IMR-90 (cell line): ENCODE measurements at regions of chr5 and their contacts with region 1.

Region 1: DNA sequence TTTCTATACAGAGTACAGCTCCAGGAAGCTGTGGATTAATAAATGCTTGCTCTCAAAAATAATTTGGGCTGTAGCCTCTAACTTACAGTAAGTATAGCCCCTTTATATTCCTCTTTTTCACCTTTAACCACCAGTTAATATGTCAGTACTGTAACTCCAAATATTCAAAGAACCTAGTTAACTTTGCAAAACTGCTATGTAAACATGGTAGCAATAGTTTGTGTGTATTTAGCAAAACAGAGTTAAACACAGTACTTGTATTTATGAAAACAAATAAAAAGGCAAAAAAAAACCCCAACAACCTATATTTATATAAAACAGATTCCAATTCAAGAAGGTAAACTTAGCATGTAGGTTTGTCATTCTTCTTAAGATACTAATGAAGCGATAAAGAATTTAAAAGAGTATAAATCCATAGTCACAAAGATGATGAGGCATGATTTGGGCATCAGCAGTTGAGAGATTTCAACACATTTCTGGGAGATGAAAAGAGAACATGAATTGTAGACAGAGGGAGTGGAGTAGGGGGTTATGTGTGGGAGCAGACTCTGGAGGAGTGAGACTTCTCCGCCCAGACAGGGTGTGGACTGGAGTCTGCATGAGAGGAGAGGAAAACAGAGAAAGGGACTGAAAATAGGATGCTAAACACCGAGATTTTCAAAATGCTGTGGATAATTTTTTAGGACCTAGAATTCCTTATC is 47.0 kb upstream of the F2RL1 start:
- DNase-seq: peak; percentile 51
- ATAC-seq: peak; percentile 63
- H3K4me3 ChIP-seq: no peak overlapping the region
- H3K27ac ChIP-seq: peak overlapping the region; percentile 56; the same call in 1 of the 2 replicates
- H3K4me1 ChIP-seq: peaks cover 8% of the 10 kb centered on the region
- H3K27me3 ChIP-seq: no peaks in the 10 kb centered on the region
- CTCF ChIP-seq: no peak
- POLR2A ChIP-seq: no peak
- RAD21 ChIP-seq: no peak

Region 2: GRCh38 chr5:76402886-76403765 is 368.7 kb before region 1 on chr5 and contains the start of gene IQGAP2:
- CTCF ChIA-PET with region 1: no interaction called
- POLR2A ChIA-PET with region 1: no interaction called
- dilution Hi-C with region 1: no loop called
- in situ Hi-C with region 1: no loop called
- intact Hi-C with region 1: loop called (anchors 10 kb)
- DNase-seq: peak; percentile 34
- ATAC-seq: peak; percentile 85
- H3K4me3 ChIP-seq: peak within 1 kb of the TSS; percentile 51
- H3K27ac ChIP-seq: no peak within 1 kb of the TSS
- H3K4me1 ChIP-seq: no peaks in the 10 kb centered on the region
- H3K27me3 ChIP-seq: peaks cover 45% of the 10 kb centered on the region
- CTCF ChIP-seq: peak; percentile 53
- POLR2A ChIP-seq: no peak
- RAD21 ChIP-seq: peak; percentile 42
- total RNA-seq, gene IQGAP2: 0.28 and 0.36 TPM in 2 replicates

Region 3: GRCh38 chr5:76601470-76601869 is 170.4 kb before region 1 on chr5:
- CTCF ChIA-PET with region 1: interaction called, 13 read pairs
- POLR2A ChIA-PET with region 1: no interaction called
- dilution Hi-C with region 1: no loop called
- in situ Hi-C with region 1: loop called (anchors 5 kb)
- intact Hi-C with region 1: loop called (anchors 1 kb)
- DNase-seq: peak; percentile 80
- ATAC-seq: peak; percentile 75
- H3K4me3 ChIP-seq: no peak overlapping the region
- H3K27ac ChIP-seq: no peak overlapping the region
- H3K4me1 ChIP-seq: peaks cover 2% of the 10 kb centered on the region; the same call in 1 of the 2 replicates
- H3K27me3 ChIP-seq: no peaks in the 10 kb centered on the region
- CTCF ChIP-seq: peak; percentile 85
- POLR2A ChIP-seq: no peak
- RAD21 ChIP-seq: peak; percentile 90

Region 4: DNA sequence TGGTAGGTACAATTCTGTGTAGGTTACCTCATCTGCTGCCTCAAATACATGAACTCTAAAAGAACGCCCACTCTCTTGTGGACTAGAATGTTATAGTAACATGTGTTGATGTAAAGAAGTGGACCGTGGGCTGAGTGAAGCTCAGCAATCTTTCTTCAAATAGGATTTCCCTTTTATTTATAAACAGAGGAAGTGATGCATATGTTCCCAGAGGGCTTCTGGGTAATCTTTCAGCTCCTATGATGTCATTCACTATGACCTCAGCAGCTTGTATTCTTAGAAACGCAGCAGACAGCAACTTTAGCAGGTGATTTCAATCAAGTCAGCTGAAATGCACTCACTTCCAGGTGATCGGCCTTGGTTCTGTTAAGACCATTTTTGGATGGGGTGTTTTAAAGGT is 163.0 kb before region 1 on chr5:
- CTCF ChIA-PET with region 1: interaction called, 15 read pairs
- POLR2A ChIA-PET with region 1: no interaction called
- dilution Hi-C with region 1: no loop called
- in situ Hi-C with region 1: loop called (anchors 5 kb)
- intact Hi-C with region 1: no loop called
- DNase-seq: peak; percentile 96
- ATAC-seq: peak; percentile 46; the same call in 1 of the 2 replicates
- H3K4me3 ChIP-seq: no peak overlapping the region
- H3K27ac ChIP-seq: no peak overlapping the region
- H3K4me1 ChIP-seq: peaks cover 11% of the 10 kb centered on the region
- H3K27me3 ChIP-seq: no peaks in the 10 kb centered on the region
- CTCF ChIP-seq: no peak
- POLR2A ChIP-seq: no peak
- RAD21 ChIP-seq: no peak

Region 5: GRCh38 chr5:76641514-76642120 is 130.2 kb before region 1 on chr5:
- CTCF ChIA-PET with region 1: interaction called, 4 read pairs
- POLR2A ChIA-PET with region 1: no interaction called
- dilution Hi-C with region 1: no loop called
- in situ Hi-C with region 1: no loop called
- intact Hi-C with region 1: loop called (anchors 1 kb)
- DNase-seq: peak; percentile 79
- ATAC-seq: peak; percentile 69
- H3K4me3 ChIP-seq: no peak overlapping the region
- H3K27ac ChIP-seq: no peak overlapping the region
- H3K4me1 ChIP-seq: peaks cover 10% of the 10 kb centered on the region
- H3K27me3 ChIP-seq: no peaks in the 10 kb centered on the region
- CTCF ChIP-seq: peak; percentile 94
- POLR2A ChIP-seq: no peak
- RAD21 ChIP-seq: peak; percentile 93

Region 6: GRCh38 chr5:76790632-76791290 is 18.9 kb after region 1 on chr5:
- CTCF ChIA-PET with region 1: interaction called, 11 read pairs
- POLR2A ChIA-PET with region 1: no interaction called
- dilution Hi-C with region 1: no loop called
- in situ Hi-C with region 1: no loop called
- intact Hi-C with region 1: no loop called
- DNase-seq: peak; percentile 100
- ATAC-seq: peak; percentile 73
- H3K4me3 ChIP-seq: no peak overlapping the region
- H3K27ac ChIP-seq: peak overlapping the region; percentile 74
- H3K4me1 ChIP-seq: peaks cover 20% of the 10 kb centered on the region
- H3K27me3 ChIP-seq: no peaks in the 10 kb centered on the region
- CTCF ChIP-seq: no peak
- POLR2A ChIP-seq: peak; percentile 68; the same call in 1 of the 2 replicates
- RAD21 ChIP-seq: 0 out of 2 replicates have a peak, but pooled peaks have one; percentile 16

Region 7: DNA sequence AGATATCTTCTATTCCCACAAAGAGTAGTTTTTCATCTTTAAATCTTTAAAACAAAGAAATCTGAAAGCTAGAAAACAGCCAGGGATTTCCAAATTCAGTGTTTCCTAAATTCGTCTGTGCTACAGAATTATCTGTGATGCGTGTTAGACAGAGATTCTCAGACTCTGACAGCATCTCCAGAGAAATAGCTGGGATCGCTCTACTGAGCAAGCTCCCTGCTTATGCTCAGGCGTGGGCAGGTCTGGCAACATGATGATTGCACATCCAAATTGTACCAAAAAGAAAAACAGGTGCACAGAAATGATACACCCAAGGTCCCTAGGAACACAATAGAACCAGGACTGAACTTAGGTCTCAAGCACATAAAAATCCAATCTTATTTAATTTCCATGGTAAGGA is 158.2 kb after region 1 on chr5:
- CTCF ChIA-PET with region 1: no interaction called
- POLR2A ChIA-PET with region 1: no interaction called
- dilution Hi-C with region 1: no loop called
- in situ Hi-C with region 1: no loop called
- intact Hi-C with region 1: no loop called
- DNase-seq: no peak
- ATAC-seq: no peak
- H3K4me3 ChIP-seq: no peak overlapping the region
- H3K27ac ChIP-seq: no peak overlapping the region
- H3K4me1 ChIP-seq: no peaks in the 10 kb centered on the region
- H3K27me3 ChIP-seq: peaks cover 25% of the 10 kb centered on the region
- CTCF ChIP-seq: no peak
- POLR2A ChIP-seq: no peak
- RAD21 ChIP-seq: no peak

Region 8: DNA sequence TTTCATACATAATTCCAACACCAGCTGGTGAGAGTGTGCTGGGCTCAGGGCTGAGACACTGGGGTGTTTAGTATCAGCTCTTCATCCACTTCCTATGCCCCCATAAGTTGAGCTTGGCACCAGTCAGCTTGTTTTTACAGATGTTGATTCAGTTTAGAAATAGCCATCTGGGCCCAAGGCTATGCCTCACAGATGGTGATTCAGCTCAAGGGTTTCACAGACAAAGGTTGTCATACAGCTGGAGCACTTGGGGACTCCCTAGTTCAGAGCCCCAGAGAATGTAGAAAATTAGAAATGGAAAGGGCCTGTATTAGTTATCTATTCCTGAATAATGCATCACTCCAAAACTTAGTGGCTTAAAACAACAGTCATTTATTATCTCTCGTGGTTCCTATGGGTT is 170.7 kb after region 1 on chr5:
- CTCF ChIA-PET with region 1: no interaction called
- POLR2A ChIA-PET with region 1: no interaction called
- dilution Hi-C with region 1: no loop called
- in situ Hi-C with region 1: no loop called
- intact Hi-C with region 1: no loop called
- DNase-seq: peak; percentile 81
- ATAC-seq: peak; percentile 88
- H3K4me3 ChIP-seq: no peak overlapping the region
- H3K27ac ChIP-seq: no peak overlapping the region
- H3K4me1 ChIP-seq: 0 out of 2 replicates have a peak, but pooled peaks cover 1% of the 10 kb centered on the region
- H3K27me3 ChIP-seq: peaks cover 2% of the 10 kb centered on the region; the same call in 1 of the 2 replicates
- CTCF ChIP-seq: no peak
- POLR2A ChIP-seq: no peak
- RAD21 ChIP-seq: no peak